Activated T-helper 2 cell treated with anti-CD3 and anti-CD28 coated beads, Interferon-gamma antibody, Interleukin-2, Interleukin-4, amounts not matched to agents 10 μg/mL and 5 μg/mL and 100 μg/mL, durations not matched to agents 14 hours and 24 hours and 36 hours (primary cell): ENCODE measurements at regions of chr16 and their contacts with region 1.

Region 1: DNA sequence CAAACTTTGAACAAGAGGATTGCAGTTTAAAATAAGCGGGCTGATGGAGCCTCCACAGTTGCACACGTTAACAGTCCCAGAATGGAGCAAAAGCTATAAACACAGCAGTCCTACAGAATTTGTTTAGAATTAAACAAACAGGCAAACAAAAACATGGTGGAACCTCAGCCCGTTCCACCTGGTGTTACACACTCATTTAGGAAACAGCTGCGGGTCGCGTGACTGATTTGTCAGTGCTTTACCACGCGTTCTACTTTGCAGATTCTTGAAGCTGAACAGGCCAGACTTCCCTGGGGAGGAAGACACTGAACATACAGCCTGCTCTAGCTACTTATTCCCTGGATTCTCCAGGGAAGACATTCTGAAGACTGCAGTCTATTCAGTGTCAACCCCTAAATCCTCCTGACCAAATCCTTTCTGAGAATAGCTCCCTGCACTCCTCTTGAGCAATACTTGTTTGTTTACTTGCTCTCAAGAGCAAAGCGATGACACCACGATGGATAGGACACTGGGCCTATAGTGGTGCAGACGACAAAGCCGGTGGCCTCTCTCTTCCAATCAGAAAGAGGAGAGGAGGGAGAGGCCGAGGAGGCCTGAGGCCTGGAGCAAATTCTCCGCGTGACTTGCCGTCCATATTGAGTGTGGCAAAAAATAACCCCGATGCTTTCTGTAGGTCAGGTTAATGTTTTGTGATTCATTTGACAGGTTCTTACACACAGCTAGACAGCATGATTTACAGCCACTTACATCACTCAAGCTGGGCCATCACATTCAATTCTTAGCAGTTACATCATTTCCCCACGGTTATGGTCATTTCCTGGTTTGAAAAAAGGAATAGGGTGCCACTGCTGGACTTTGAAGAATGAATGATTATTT is 4.0 kb upstream of the MAP1LC3B start:
- DNase-seq: peak; percentile 89
- H3K4me3 Mint-ChIP-seq: peak overlapping the region; percentile 13
- H3K27ac Mint-ChIP-seq: peak overlapping the region; percentile 88
- H3K4me1 Mint-ChIP-seq: peaks cover 46% of the 10 kb centered on the region
- H3K27me3 Mint-ChIP-seq: no peaks in the 10 kb centered on the region

Region 2: DNA sequence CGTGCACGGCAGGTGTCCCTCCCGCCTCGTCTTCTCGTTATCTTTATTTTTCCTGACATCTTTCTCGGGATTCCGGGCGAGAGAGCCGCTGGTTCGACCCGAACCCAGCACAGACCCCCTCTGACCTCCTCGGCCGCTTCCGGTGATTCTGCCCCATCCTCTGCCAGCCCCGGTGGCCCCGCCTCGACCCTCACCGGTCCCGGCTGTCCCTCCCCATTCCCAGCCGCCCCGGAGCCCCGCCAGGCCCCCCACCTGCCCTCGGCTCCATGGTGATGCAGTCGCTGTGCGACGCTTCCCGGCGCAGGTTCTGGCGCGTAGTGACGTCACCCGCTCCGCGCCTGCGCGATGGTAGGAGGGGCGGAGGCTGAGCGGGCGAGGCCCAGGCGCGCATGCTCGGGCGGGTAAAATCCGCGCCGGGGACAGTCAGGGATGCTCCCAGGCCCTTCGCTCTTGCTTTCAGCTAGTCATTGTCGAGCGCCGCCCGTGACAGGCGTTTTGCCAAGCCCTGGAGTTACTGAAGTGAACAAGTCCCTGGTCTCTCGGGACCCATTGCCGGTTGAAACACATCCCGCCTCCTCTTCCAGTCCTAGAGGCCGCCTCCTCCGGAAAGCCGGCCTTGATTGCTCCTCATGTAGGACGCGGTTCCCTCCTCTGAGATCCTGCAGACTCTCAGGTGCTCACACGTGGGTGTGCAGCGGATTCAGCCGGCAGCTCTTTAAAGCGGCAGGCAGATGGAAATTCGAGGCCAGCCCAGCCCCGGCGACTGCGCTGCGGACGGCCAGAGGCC is 833.1 kb before region 1 on chr16 and contains the start of gene MTHFSD:
- intact Hi-C with region 1: loop called (anchors 10 kb)
- DNase-seq: peak; percentile 92
- H3K4me3 Mint-ChIP-seq: peak within 1 kb of the TSS; percentile 86
- H3K27ac Mint-ChIP-seq: peak within 1 kb of the TSS; percentile 93
- H3K4me1 Mint-ChIP-seq: peaks cover 27% of the 10 kb centered on the region
- H3K27me3 Mint-ChIP-seq: peaks cover 6% of the 10 kb centered on the region
- total RNA-seq, gene MTHFSD: 21.9 and 22.8 TPM in 2 replicates

Region 3: GRCh38 chr16:87492721-87493607 is 104.8 kb after region 1 on chr16 and contains the start of gene ZCCHC14:
- intact Hi-C with region 1: loop called (anchors 5 kb)
- DNase-seq: peak; percentile 98
- H3K4me3 Mint-ChIP-seq: peak within 1 kb of the TSS; percentile 82
- H3K27ac Mint-ChIP-seq: peak within 1 kb of the TSS; percentile 68
- H3K4me1 Mint-ChIP-seq: peaks cover 41% of the 10 kb centered on the region
- H3K27me3 Mint-ChIP-seq: peaks cover 24% of the 10 kb centered on the region
- total RNA-seq, gene ZCCHC14: 7.4 and 8.0 TPM in 2 replicates

Region 4: GRCh38 chr16:87778830-87779579 is 390.8 kb after region 1 on chr16:
- intact Hi-C with region 1: loop called (anchors 10 kb)
- DNase-seq: peak; percentile 92
- H3K4me3 Mint-ChIP-seq: peak overlapping the region; percentile 77
- H3K27ac Mint-ChIP-seq: peak overlapping the region; percentile 94
- H3K4me1 Mint-ChIP-seq: peaks cover 53% of the 10 kb centered on the region
- H3K27me3 Mint-ChIP-seq: no peaks in the 10 kb centered on the region

Region 5: DNA sequence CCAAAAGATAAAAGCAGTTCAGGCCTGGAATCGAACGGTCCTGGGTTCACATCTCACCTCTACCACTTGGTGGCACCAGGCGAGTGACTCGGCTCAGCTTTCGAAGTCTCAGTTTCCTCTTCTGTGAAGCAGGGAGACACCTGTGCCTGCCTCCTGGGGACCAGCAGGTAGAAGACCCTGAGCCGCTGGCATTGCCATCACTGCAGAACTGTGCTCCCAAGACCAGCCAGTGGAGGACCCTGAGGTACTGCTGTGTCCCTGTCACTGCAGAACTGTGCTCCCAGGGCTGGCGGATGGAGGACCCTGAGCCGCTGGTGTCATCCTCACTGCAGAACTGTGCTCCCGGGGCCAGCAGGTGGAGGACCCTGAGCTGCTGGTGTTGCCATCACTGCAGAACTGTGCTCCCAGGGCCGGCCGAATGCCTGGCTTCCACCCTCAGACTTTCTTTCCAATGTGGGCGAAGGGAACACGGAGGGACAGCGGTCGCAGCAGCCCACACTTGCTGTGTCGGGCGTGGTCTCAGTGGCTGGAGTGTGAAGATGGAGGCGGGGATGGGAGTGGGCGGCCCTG is 489.8 kb after region 1 on chr16:
- intact Hi-C with region 1: loop called (anchors 10 kb)
- DNase-seq: peak; percentile 32
- H3K4me3 Mint-ChIP-seq: no peak overlapping the region
- H3K27ac Mint-ChIP-seq: peak overlapping the region; percentile 75
- H3K4me1 Mint-ChIP-seq: peaks cover 52% of the 10 kb centered on the region
- H3K27me3 Mint-ChIP-seq: no peaks in the 10 kb centered on the region

Region 6: GRCh38 chr16:87950765-87951549 is 562.8 kb after region 1 on chr16 and contains the start of gene BANP:
- intact Hi-C with region 1: loop called (anchors 2 kb)
- DNase-seq: peak; percentile 96
- H3K4me3 Mint-ChIP-seq: peak within 1 kb of the TSS; percentile 94
- H3K27ac Mint-ChIP-seq: peak within 1 kb of the TSS; percentile 99
- H3K4me1 Mint-ChIP-seq: peaks cover 46% of the 10 kb centered on the region
- H3K27me3 Mint-ChIP-seq: no peaks in the 10 kb centered on the region
- total RNA-seq, gene BANP: 39.7 and 40.8 TPM in 2 replicates

Region 7: GRCh38 chr16:88452482-88453216 is 1064.5 kb after region 1 on chr16:
- intact Hi-C with region 1: loop called (anchors 5 kb)
- DNase-seq: peak; percentile 97
- H3K4me3 Mint-ChIP-seq: peak overlapping the region; percentile 81
- H3K27ac Mint-ChIP-seq: peak overlapping the region; percentile 80
- H3K4me1 Mint-ChIP-seq: peaks cover 22% of the 10 kb centered on the region
- H3K27me3 Mint-ChIP-seq: peaks cover 11% of the 10 kb centered on the region